ENCODE measurements at regions of chr1 and their contacts with region 1.

Region 1: DNA sequence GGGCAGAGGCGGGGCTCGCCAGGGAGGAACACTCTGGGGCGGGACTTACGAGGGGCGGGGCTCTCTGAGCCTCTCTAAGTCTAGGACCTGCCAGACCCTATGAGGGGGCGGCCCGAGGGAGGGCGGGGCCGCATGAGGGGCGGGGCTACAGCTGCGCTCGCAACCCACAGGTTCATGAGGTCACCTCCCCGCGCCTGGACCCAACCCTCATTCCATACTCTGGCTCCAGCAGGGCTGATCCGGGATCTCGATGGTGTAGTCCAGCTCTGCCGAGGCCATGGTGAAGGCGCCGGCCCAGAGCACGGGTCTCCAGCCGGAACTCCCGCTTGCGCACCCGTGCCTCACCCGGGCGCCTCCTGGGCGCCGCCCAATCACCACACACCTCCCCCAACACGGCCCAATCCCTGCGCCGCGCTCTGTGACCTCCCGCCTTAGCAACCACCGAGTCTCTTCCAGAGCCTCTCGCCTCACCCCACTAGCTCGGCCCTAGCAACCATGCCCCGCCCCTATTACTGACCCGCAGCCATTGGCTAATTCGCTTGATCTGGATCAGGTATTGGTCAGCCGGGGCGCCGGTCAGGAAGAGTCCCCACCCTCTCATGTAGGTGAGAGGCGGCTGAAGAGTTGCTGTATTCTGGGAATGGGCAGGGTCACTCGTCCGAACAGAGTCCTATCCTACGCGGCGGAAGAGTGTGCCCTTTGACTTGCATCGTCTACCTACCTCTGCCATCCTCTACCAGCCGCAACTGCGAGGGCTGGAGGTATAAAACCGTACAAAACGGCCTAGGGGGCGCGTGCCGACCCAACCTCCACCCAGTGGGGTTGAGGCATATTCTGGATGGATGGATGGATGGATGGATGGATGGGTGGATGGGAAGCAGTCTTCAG is at the starts of genes ARMH1 and TMEM53:
- DNase-seq: peak; percentile 95 to 97 (median 96)
- H3K4me3 ChIP-seq: peak within 1 kb of the TSS; percentile 90
- H3K4me3 Mint-ChIP-seq: peak within 1 kb of the TSS; percentile 83 to 96 (median 90)
- H3K27ac ChIP-seq: peak within 1 kb of the TSS; percentile 93
- H3K27ac Mint-ChIP-seq: peak within 1 kb of the TSS; percentile 82 to 98 (median 92)
- H3K4me1 ChIP-seq: peaks cover 13% of the 10 kb centered on the region
- H3K4me1 Mint-ChIP-seq: peaks cover 17 to 26% (median 25%) of the 10 kb centered on the region in 3 donors
- H3K27me3 ChIP-seq: no peaks in the 10 kb centered on the region
- H3K27me3 Mint-ChIP-seq: no peaks in the 10 kb centered on the region
- total RNA-seq, gene ARMH1: 33.3 to 38.0 TPM
- total RNA-seq, gene TMEM53: 2.3 to 2.5 TPM

Region 2: DNA sequence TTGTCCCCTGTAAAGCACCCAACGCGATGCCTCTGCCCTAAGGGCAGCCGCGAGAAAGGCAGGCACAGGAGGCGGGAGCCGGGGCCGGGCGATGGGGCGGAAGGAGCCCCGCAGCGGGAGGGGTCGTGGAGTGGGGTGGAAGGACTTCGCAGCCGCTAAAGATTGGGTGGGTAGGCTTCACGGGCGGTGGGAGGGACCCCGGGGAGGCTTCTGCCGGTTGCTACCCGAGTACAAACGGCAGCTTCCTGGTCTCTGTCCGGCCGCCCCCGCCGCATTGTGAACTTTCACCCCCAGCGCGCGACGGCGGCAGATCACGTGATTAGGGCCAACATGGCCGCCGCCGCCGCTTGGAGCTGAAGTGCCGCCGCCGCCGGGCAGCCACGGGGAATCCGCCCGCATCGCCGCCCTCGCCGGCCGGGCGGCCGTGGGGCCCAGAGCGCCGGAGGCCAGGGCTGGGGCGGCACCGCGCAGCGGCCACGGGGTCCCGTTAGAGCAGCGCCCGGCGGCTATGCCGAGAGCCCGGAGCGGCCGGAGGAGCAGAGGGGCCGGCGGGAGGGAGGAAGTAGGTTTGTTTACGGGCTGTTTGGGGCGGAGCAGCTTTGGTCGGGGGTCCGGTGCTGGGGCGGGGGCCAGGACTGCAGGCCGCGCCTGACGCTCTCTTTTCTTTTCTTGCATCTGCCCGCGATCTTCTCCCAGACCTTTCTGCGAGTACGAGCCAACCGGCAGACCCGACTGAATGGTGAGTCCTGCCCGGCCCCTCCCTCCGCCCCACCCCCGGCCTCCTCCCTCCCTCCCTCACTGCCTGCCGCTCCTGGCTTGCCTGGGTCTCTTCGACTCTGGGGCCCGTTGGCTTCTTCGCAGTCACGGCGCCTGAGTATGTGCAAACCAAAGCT is 42.5 kb before region 1 on chr1:
- CTCF ChIA-PET with region 1: interaction called, 5 read pairs
- POLR2A ChIA-PET with region 1: interaction called, 19 read pairs
- DNase-seq: peak; percentile 84 to 92 (median 85)
- H3K4me3 ChIP-seq: peak overlapping the region; percentile 79
- H3K4me3 Mint-ChIP-seq: peak overlapping the region; percentile 91 to 98 (median 93)
- H3K27ac ChIP-seq: peak overlapping the region; percentile 83
- H3K27ac Mint-ChIP-seq: peak overlapping the region; percentile 96 to 100 (median 98)
- H3K4me1 ChIP-seq: peaks cover 28% of the 10 kb centered on the region
- H3K4me1 Mint-ChIP-seq: peaks cover 42 to 52% (median 49%) of the 10 kb centered on the region in 3 donors
- H3K27me3 ChIP-seq: no peaks in the 10 kb centered on the region
- H3K27me3 Mint-ChIP-seq: no peaks in the 10 kb centered on the region

Region 3: GRCh38 chr1:44684525-44684924 is 10.2 kb after region 1 on chr1:
- CTCF ChIA-PET with region 1: interaction called, 13 read pairs
- POLR2A ChIA-PET with region 1: no interaction called
- DNase-seq: no peak
- H3K4me3 ChIP-seq: no peak overlapping the region
- H3K4me3 Mint-ChIP-seq: no peak overlapping the region
- H3K27ac ChIP-seq: no peak overlapping the region
- H3K27ac Mint-ChIP-seq: peak overlapping the region in 1 of 8 donors; percentile 82
- H3K4me1 ChIP-seq: no peaks in the 10 kb centered on the region
- H3K4me1 Mint-ChIP-seq: no peaks in the 10 kb centered on the region
- H3K27me3 ChIP-seq: no peaks in the 10 kb centered on the region
- H3K27me3 Mint-ChIP-seq: peaks cover 0 to 3% of the 10 kb centered on the region in 2 donors

Region 4: DNA sequence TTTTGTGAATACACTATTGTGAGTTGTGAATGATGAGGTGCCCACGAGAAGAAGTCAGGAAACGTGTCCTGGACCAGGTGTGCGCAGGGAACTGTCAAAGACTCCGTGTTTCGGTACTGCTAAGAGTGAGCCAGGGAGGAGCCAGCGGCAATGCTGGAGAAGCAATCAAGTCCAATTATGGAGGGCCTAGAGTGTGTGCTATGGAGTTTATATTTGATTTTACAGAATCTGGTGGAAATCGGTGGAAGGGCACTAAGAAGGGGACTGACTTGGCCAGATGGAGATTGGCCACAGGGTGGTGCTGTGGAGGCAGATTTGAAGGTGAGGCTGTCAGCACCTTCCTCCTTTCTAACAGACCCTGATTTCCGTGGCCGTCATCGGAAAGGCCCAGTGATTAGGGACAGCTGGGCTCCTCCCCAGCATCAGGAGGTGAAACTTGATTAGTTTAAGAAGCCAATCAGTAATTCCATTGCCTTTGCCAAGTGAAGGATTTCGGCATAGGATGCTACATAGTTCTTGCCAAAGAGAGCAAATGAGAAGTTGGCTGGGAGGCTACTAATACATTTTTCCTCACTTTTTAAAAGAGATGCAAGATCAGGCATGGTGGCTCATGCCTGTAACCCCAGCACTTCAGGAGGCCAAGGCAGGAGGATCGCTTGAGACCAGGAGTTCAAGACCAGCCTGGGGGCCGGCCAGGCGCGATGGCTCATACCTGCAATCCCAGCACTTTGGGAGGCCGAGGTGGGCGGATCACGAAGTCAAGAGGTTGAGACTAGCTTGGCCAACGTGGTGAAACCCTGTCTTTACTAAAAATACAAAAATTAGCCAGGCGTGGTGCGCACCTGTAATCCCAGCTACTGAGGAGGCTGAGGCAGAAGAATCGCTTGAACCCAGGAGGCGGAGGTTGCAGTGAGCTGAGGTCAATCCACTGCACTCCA is 161.7 kb after region 1 on chr1:
- CTCF ChIA-PET with region 1: no interaction called
- POLR2A ChIA-PET with region 1: no interaction called
- DNase-seq: peak; percentile 67 to 88 (median 72)
- H3K4me3 ChIP-seq: no peak overlapping the region
- H3K4me3 Mint-ChIP-seq: peak overlapping the region in 5 of 7 donors; percentile 0 to 49 (median 38)
- H3K27ac ChIP-seq: no peak overlapping the region
- H3K27ac Mint-ChIP-seq: peak overlapping the region in 4 of 8 donors; percentile 6 to 81 (median 37)
- H3K4me1 ChIP-seq: no peaks in the 10 kb centered on the region
- H3K4me1 Mint-ChIP-seq: peaks cover 5 to 8% (median 7%) of the 10 kb centered on the region in 3 donors
- H3K27me3 ChIP-seq: no peaks in the 10 kb centered on the region
- H3K27me3 Mint-ChIP-seq: peaks cover 6 to 13% of the 10 kb centered on the region in 2 donors